T-cell (primary cell): ENCODE measurements at regions of chr2 and their contacts with region 1.

Region 1: DNA sequence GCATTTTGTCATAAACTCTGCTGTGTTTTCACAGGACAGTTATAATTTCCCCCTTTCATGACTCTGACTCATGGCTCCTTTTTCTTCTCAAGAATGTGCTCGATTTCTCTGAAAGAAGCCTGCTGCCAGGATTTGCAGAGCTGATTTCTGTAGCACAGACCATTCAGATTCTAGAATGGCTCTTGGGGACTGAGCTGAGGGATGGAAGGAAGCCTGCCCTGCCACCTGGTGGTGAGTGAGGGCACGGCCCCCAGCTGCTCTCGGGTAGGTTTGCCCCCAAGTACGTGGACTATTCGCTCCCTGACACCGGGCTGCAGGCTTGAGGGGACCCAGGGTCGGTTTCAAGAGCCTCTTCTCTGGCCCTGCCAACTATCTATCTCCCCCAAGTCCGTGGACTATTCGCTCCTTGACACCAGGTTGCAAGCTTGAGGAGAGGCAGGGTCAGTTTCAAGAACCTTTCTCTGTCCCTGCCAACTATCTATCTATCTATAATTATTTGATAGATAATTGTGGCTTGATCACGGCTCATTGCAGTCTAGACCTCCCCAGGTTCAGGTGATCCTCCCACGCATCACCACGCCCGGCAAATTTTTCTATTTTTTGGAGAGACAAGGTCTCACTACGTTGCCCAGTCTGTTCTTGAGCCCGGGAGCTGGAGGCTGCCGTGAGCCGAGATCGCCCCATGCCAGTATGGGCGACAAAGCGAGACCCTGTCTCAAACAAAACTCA is 1.4 kb upstream of the SMYD5 start:
- DNase-seq: peak; percentile 30 to 86 (median 63)
- ATAC-seq: peak; percentile 62 to 73 (median 66)
- H3K4me3 ChIP-seq: no peak overlapping the region
- H3K4me3 Mint-ChIP-seq: peak overlapping the region; percentile 49 to 79 (median 53)
- H3K27ac ChIP-seq: no peak overlapping the region
- H3K27ac Mint-ChIP-seq: peak overlapping the region in 1 of 2 donors; percentile 69
- H3K4me1 ChIP-seq: peaks cover 5 to 25% of the 10 kb centered on the region in 2 experiments
- H3K4me1 Mint-ChIP-seq: peaks cover 36 to 41% (median 38%) of the 10 kb centered on the region in 3 donors
- H3K27me3 ChIP-seq: peaks cover 0 to 6% of the 10 kb centered on the region in 2 experiments
- H3K27me3 Mint-ChIP-seq: peaks cover 7 to 13% of the 10 kb centered on the region in 2 donors

Region 2: DNA sequence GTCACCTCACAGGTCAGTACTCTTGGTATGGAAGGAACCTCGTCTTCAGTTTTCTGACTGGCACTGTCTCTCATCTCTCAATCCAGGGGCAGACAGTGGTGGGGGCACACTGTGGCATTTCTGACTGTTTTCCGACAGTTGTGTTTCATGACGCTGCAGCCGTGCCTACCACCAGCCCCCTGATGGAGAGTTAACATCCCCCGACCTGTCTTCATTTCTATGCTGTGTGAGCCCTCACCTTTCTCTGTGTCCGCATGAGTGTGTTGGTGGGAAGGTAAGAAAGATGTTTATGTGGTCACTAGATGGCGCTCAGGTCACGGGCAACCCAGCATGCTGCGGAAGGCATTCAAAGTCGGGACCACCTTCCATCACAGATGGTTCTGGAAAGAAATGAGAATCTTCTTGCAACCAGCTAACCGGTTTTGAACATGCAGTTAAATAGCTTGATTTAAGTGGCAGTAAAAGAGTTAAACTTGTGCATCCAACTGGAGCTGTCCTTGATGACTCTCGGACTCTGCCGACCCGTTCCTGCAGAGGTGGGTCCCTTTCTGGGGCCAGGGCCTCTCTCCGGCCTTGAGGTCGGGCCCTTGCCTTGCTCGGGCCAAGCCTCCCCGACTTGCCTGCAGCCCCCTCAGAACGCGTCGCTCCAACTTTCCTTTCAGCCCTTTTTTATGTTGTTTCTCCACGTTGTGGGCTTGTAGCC is 1666.9 kb before region 1 on chr2:
- CTCF ChIA-PET with region 1: no interaction called
- POLR2A ChIA-PET with region 1: no interaction called
- DNase-seq: peak in 27 of 35 experiments; percentile 1 to 70 (median 24)
- ATAC-seq: peak; percentile 43 to 72 (median 68)
- H3K4me3 ChIP-seq: peak overlapping the region; percentile 24 to 51
- H3K4me3 Mint-ChIP-seq: peak overlapping the region; percentile 64 to 75 (median 69)
- H3K27ac ChIP-seq: no peak overlapping the region
- H3K27ac Mint-ChIP-seq: no peak overlapping the region
- H3K4me1 ChIP-seq: peaks cover 0 to 14% of the 10 kb centered on the region in 2 experiments
- H3K4me1 Mint-ChIP-seq: peaks cover 8 to 14% (median 10%) of the 10 kb centered on the region in 3 donors
- H3K27me3 ChIP-seq: peaks cover 2 to 34% of the 10 kb centered on the region in 2 experiments
- H3K27me3 Mint-ChIP-seq: peaks cover 27 to 34% of the 10 kb centered on the region in 2 donors

Region 3: DNA sequence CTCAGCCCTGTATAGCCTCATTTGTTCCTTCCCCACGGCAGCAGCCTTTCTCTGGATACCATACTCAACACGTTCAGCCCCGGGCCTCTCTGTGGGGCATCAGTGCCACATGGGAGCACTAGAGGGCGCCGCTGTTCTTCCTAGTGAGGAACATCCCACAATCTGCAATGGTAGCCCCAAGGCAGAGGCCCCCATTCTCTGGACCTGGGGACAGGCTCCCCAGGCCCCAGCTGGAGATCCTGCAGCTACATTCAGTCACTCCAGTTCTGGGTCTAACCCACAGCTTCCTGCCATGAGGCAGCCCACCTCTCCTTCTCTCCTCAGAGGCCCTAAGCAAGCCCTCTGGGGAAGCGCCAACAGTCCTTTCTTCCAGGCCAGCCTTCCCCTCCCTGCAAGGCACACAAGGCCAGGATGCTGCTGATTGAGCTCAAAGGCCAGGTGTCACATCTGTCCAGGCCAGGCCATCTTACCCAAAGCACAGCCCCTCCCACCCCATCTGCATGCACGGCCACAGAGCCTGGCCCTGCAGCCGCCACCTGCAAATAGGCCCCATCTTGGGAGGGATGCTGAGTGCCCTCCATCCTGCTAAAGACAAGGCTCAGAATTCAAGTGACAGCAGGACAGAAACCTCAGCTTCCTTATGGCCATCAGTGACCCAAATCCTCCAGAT is 126.8 kb before region 1 on chr2:
- CTCF ChIA-PET with region 1: interaction called, 9 to 14 read pairs
- POLR2A ChIA-PET with region 1: no interaction called
- DNase-seq: peak; percentile 55 to 86 (median 76)
- ATAC-seq: peak; percentile 83 to 97 (median 87)
- H3K4me3 ChIP-seq: no peak overlapping the region
- H3K4me3 Mint-ChIP-seq: no peak overlapping the region
- H3K27ac ChIP-seq: no peak overlapping the region
- H3K27ac Mint-ChIP-seq: no peak overlapping the region
- H3K4me1 ChIP-seq: peaks cover 0 to 7% of the 10 kb centered on the region in 2 experiments
- H3K4me1 Mint-ChIP-seq: peaks cover 0 to 14% (median 2%) of the 10 kb centered on the region in 3 donors
- H3K27me3 ChIP-seq: peaks cover 0 to 3% of the 10 kb centered on the region in 2 experiments
- H3K27me3 Mint-ChIP-seq: no peaks in the 10 kb centered on the region

Region 4: DNA sequence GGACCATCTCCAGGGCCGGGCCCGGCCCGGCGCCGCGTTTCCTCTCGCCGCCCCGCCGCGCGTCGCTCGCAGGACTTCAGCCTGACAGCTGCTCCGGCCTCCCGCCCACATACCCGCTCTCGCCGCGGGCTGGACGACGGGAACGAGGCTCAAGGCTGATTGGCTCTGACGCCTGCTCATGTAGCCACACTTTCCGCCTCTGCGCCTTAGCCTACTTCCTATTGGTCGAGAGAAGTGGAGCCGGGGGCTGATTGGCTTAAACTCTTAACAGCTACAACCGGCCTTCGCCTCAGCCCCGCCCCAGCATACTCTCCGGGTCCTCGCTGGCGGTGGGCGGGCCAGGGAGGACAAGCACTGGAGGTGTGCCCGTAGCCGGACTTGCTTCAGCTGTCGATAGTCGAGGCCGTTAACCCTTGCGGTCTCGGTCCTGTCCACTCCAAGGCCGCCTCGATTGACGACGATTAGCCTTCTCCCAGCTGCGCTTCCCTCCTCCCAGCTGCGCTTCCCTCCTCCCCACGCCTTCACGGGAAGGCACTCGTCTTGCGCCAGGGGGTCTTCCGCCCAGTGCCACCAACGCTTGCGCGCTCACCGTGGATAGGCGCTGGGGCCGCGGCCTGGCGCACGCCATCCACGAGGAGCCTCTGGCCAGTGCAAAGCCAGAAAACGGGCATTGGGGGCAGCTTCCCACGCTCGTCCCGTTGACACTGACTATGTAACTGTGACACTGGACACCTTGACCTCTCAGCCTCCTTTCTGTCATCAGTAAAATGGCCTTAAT is 20.7 kb after region 1 on chr2 and contains the start of gene PRADC1:
- CTCF ChIA-PET with region 1: interaction called, 7 to 19 read pairs
- POLR2A ChIA-PET with region 1: interaction called, 3 to 7 read pairs
- DNase-seq: peak; percentile 81 to 97 (median 92)
- ATAC-seq: peak; percentile 82 to 85 (median 84)
- H3K4me3 ChIP-seq: peak within 1 kb of the TSS; percentile 75 to 99
- H3K4me3 Mint-ChIP-seq: peak within 1 kb of the TSS; percentile 92 to 98 (median 95)
- H3K27ac ChIP-seq: peak within 1 kb of the TSS; percentile 92
- H3K27ac Mint-ChIP-seq: peak within 1 kb of the TSS; percentile 77 to 96
- H3K4me1 ChIP-seq: peaks cover 15 to 39% of the 10 kb centered on the region in 2 experiments
- H3K4me1 Mint-ChIP-seq: peaks cover 37 to 39% (median 38%) of the 10 kb centered on the region in 3 donors
- H3K27me3 ChIP-seq: no peaks in the 10 kb centered on the region
- H3K27me3 Mint-ChIP-seq: no peaks in the 10 kb centered on the region
- total RNA-seq, gene PRADC1: 6.1 to 9.9 (median 6.4) TPM

Region 5: GRCh38 chr2:73685770-73686438 is 473.3 kb after region 1 on chr2:
- CTCF ChIA-PET with region 1: no interaction called
- POLR2A ChIA-PET with region 1: no interaction called
- DNase-seq: no peak
- ATAC-seq: no peak
- H3K4me3 ChIP-seq: no peak overlapping the region
- H3K4me3 Mint-ChIP-seq: no peak overlapping the region
- H3K27ac ChIP-seq: no peak overlapping the region
- H3K27ac Mint-ChIP-seq: no peak overlapping the region
- H3K4me1 ChIP-seq: no peaks in the 10 kb centered on the region
- H3K4me1 Mint-ChIP-seq: no peaks in the 10 kb centered on the region
- H3K27me3 ChIP-seq: peaks cover 0 to 3% of the 10 kb centered on the region in 2 experiments
- H3K27me3 Mint-ChIP-seq: peaks cover 0 to 3% of the 10 kb centered on the region in 2 donors